ENCODE measurements at regions of chr6 and their contacts with region 1.

Region 1: GRCh38 chr6:75893058-75893775 is 144.2 kb downstream of the MYO6 start:
- DNase-seq: peak in 2 of 35 experiments; percentile 2 to 58
- ATAC-seq: no peak
- H3K4me3 ChIP-seq: no peak overlapping the region
- H3K4me3 Mint-ChIP-seq: no peak overlapping the region
- H3K27ac ChIP-seq: no peak overlapping the region
- H3K27ac Mint-ChIP-seq: no peak overlapping the region
- H3K4me1 ChIP-seq: no peaks in the 10 kb centered on the region
- H3K4me1 Mint-ChIP-seq: peaks cover 0 to 2% (median 2%) of the 10 kb centered on the region in 3 donors
- H3K27me3 ChIP-seq: no peaks in the 10 kb centered on the region
- H3K27me3 Mint-ChIP-seq: peaks cover 0 to 1% of the 10 kb centered on the region in 2 donors

Region 2: GRCh38 chr6:75882126-75882525 is 11.1 kb before region 1 on chr6:
- CTCF ChIA-PET with region 1: interaction called, 14 to 16 read pairs
- POLR2A ChIA-PET with region 1: no interaction called
- DNase-seq: no peak
- ATAC-seq: no peak
- H3K4me3 ChIP-seq: no peak overlapping the region
- H3K4me3 Mint-ChIP-seq: no peak overlapping the region
- H3K27ac ChIP-seq: no peak overlapping the region
- H3K27ac Mint-ChIP-seq: no peak overlapping the region
- H3K4me1 ChIP-seq: no peaks in the 10 kb centered on the region
- H3K4me1 Mint-ChIP-seq: no peaks in the 10 kb centered on the region
- H3K27me3 ChIP-seq: no peaks in the 10 kb centered on the region
- H3K27me3 Mint-ChIP-seq: no peaks in the 10 kb centered on the region

Region 3: DNA sequence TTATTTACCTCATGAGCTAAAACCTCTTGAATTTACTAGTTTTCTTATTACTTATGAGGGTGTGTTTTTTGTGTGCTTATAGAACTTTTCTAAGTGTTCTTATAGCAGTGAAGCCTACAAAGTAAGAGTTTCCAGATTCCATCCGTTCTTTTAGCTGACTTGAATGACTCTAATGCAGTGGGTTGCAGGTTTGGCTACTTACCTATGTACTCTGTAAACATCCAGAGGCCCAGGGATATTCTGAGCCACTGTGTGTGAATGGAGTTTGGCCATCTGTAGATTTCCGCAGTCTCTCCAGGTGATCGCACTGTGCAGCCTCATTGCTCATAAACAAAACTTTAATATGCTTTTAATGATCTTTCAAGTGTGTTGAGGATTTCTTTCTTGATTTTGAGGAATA is 13.7 kb after region 1 on chr6:
- CTCF ChIA-PET with region 1: interaction called, 6 to 11 read pairs
- POLR2A ChIA-PET with region 1: no interaction called
- DNase-seq: no peak
- ATAC-seq: no peak
- H3K4me3 ChIP-seq: no peak overlapping the region
- H3K4me3 Mint-ChIP-seq: no peak overlapping the region
- H3K27ac ChIP-seq: no peak overlapping the region
- H3K27ac Mint-ChIP-seq: no peak overlapping the region
- H3K4me1 ChIP-seq: no peaks in the 10 kb centered on the region
- H3K4me1 Mint-ChIP-seq: no peaks in the 10 kb centered on the region
- H3K27me3 ChIP-seq: no peaks in the 10 kb centered on the region
- H3K27me3 Mint-ChIP-seq: peaks cover 3% of the 10 kb centered on the region in 2 donors

Region 4: GRCh38 chr6:76134651-76135050 is 241.4 kb after region 1 on chr6:
- CTCF ChIA-PET with region 1: no interaction called
- POLR2A ChIA-PET with region 1: no interaction called
- DNase-seq: no peak
- ATAC-seq: no peak
- H3K4me3 ChIP-seq: no peak overlapping the region
- H3K4me3 Mint-ChIP-seq: no peak overlapping the region
- H3K27ac ChIP-seq: no peak overlapping the region
- H3K27ac Mint-ChIP-seq: no peak overlapping the region
- H3K4me1 ChIP-seq: no peaks in the 10 kb centered on the region
- H3K4me1 Mint-ChIP-seq: no peaks in the 10 kb centered on the region
- H3K27me3 ChIP-seq: no peaks in the 10 kb centered on the region
- H3K27me3 Mint-ChIP-seq: no peaks in the 10 kb centered on the region